ENCODE measurements at regions of chr1 and their contacts with region 1.

Region 1: GRCh38 chr1:198681831-198682759 is 43.3 kb downstream of the PTPRC start:
- DNase-seq: peak; percentile 91
- ATAC-seq: peak; percentile 86
- H3K4me3 ChIP-seq: peak overlapping the region; percentile 32; the same call in 1 of the 2 replicates
- H3K27ac ChIP-seq: peak overlapping the region; percentile 97
- H3K4me1 ChIP-seq: peaks cover 52% of the 10 kb centered on the region
- H3K27me3 ChIP-seq: no peaks in the 10 kb centered on the region
- CTCF ChIP-seq: no peak

Region 2: GRCh38 chr1:197614916-197615692 is 1067.0 kb before region 1 on chr1:
- CTCF ChIA-PET with region 1: no interaction called
- POLR2A ChIA-PET with region 1: no interaction called
- intact Hi-C with region 1: loop called (anchors 10 kb)
- DNase-seq: peak; percentile 46
- ATAC-seq: peak; percentile 72
- H3K4me3 ChIP-seq: no peak overlapping the region
- H3K27ac ChIP-seq: no peak overlapping the region
- H3K4me1 ChIP-seq: no peaks in the 10 kb centered on the region
- H3K27me3 ChIP-seq: no peaks in the 10 kb centered on the region
- CTCF ChIP-seq: peak; percentile 63

Region 3: GRCh38 chr1:198088360-198089071 is 593.6 kb before region 1 on chr1:
- CTCF ChIA-PET with region 1: no interaction called
- POLR2A ChIA-PET with region 1: no interaction called
- intact Hi-C with region 1: loop called (anchors 10 kb)
- DNase-seq: peak; percentile 56
- ATAC-seq: peak; percentile 55
- H3K4me3 ChIP-seq: no peak overlapping the region
- H3K27ac ChIP-seq: no peak overlapping the region
- H3K4me1 ChIP-seq: no peaks in the 10 kb centered on the region
- H3K27me3 ChIP-seq: no peaks in the 10 kb centered on the region
- CTCF ChIP-seq: peak; percentile 78

Region 4: GRCh38 chr1:198465201-198466144 is 216.6 kb before region 1 on chr1:
- CTCF ChIA-PET with region 1: interaction called, 3 read pairs
- POLR2A ChIA-PET with region 1: interaction called, 5 read pairs
- intact Hi-C with region 1: loop called (anchors 1 kb)
- DNase-seq: peak; percentile 74
- ATAC-seq: peak; percentile 48
- H3K4me3 ChIP-seq: no peak overlapping the region
- H3K27ac ChIP-seq: peak overlapping the region; percentile 17; the same call in 1 of the 2 replicates
- H3K4me1 ChIP-seq: peaks cover 29% of the 10 kb centered on the region
- H3K27me3 ChIP-seq: no peaks in the 10 kb centered on the region
- CTCF ChIP-seq: peak; percentile 73

Region 5: DNA sequence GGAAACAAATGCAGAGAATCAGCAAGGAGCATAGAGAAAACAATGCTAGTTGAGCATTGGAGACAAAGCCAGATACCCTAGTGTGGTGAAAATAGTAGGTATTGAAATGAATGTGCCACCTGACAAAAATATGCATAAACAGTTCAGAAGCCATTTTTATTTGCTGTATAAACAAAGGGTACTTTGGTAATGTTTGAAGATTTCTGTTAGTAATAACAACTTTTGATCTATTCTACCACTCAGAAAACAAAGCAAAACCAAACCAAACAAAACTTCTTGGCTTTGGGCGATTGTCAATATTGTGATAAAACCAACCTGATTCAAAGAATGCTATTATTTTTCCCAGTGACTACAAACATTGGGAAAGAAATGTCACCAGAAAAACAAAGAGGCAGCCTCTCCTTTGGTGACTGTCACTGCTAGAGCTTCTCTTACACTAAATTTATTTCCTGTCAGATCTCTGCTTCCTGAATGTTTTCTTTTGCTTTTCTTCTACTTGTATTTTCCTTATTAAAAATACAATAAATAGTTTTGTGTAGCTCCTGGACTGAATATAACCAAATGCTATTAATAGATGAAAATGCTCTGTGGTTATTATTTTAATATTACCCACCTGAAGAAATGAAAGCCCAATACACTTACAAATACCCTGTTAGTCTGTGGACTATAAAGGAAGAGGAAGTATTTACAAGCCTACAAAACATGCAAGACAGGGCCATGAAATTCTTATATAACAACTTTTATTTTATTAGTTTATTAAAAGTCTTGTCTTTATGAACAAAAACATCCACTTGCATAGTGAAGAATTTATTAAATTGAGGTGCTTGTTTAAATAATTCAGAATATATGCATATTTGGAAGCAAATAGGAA is 147.3 kb before region 1 on chr1:
- CTCF ChIA-PET with region 1: no interaction called
- POLR2A ChIA-PET with region 1: no interaction called
- intact Hi-C with region 1: loop called (anchors 5 kb)
- DNase-seq: peak; percentile 59
- ATAC-seq: peak; percentile 59
- H3K4me3 ChIP-seq: no peak overlapping the region
- H3K27ac ChIP-seq: no peak overlapping the region
- H3K4me1 ChIP-seq: peaks cover 17% of the 10 kb centered on the region
- H3K27me3 ChIP-seq: no peaks in the 10 kb centered on the region
- CTCF ChIP-seq: no peak

Region 6: DNA sequence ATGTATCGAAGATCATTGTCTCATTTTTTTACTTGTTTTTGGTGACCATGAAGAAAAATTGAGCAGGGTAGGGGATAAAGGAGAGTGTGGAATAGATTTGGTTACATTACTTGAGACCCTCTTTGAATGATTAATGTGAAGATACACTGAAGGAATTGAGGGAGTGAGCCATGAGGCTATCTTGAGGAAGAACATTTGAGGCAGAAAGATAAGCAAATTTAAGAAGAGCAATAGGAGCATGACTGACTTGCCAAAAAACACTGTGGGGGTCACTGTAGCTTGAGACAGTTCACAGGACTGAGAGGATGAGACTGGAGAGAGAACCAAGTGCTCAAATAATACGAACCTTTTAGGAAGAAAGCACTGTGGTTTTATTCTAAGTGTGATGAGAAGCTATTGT is 86.3 kb before region 1 on chr1:
- CTCF ChIA-PET with region 1: interaction called, 10 read pairs
- POLR2A ChIA-PET with region 1: no interaction called
- intact Hi-C with region 1: no loop called
- DNase-seq: no peak
- ATAC-seq: no peak
- H3K4me3 ChIP-seq: no peak overlapping the region
- H3K27ac ChIP-seq: no peak overlapping the region
- H3K4me1 ChIP-seq: no peaks in the 10 kb centered on the region
- H3K27me3 ChIP-seq: no peaks in the 10 kb centered on the region
- CTCF ChIP-seq: no peak

Region 7: DNA sequence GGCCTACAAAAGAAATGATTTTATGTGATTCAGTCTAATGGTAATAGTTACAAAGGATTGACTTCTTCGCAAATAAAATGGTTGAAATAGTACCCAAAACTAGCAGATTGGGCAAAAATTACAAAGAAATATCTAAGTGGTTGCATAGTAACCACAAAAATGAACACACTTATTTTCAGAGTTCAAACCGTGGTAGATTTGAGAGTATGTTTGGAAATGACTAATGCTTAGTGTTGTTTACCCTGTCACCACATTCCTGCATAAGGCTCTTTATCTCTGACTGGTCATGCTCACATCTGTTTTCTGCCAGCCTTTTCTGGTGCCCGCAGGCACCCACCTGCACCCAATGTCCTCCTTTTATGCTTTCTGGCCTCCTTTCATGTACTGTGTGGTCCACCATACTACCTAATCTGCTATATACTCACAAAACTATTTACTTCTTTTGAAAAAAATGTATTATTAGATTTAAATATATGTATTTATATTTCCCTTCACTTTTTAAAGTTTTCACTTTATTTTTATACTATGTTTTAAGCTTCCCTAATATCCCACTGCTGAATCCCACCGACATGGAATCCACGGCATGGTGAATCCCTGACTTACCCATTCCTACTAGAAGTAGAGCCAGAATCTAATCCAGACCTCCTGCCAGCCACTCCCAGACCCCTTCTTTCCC is 12.9 kb before region 1 on chr1:
- CTCF ChIA-PET with region 1: no interaction called
- POLR2A ChIA-PET with region 1: no interaction called
- intact Hi-C with region 1: loop called (anchors 1 kb)
- DNase-seq: peak; percentile 88
- ATAC-seq: peak; percentile 89
- H3K4me3 ChIP-seq: no peak overlapping the region
- H3K27ac ChIP-seq: peak overlapping the region; percentile 98
- H3K4me1 ChIP-seq: peaks cover 63% of the 10 kb centered on the region
- H3K27me3 ChIP-seq: no peaks in the 10 kb centered on the region
- CTCF ChIP-seq: no peak